K562 (cell line): ENCODE measurements at regions of chr9 and their contacts with region 1.

Region 1: DNA sequence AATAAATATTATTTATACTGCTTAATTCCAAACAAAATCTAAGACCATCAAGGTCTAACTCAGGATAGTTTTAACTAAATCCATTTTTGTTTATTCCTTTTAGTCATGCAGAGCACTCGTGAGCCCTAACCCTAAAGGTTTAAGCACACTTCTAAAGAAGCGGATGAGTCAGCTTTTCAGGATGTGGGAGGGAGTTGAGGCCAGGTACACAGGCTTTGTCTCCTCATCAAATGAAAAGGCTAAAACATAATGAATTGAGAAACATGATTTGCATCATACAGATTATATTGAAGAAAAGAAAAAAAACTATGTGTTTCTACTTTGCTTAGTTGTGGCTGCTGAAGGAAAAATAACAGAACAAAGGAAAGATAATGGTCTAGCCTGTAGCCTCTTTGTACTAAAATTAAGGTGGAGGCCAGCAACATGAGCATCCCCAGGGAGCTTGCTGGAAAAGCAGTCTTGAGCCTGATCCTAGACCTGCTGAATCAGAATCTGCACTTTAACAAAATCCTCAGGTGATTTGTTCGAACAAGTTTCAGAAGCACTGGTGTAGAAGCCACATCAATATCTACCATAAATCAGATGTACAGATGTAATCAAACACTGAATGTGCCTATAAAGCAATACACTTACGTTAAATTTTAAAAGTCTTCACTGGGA is 21.1 kb upstream of the ISCA1 start:
- DNase-seq: peak; percentile 7 to 12 (median 10)
- ATAC-seq: no peak
- H3K4me3 ChIP-seq: no peak overlapping the region
- H3K27ac ChIP-seq: no peak overlapping the region
- H3K4me1 ChIP-seq: no peaks in the 10 kb centered on the region
- H3K27me3 ChIP-seq: no peaks in the 10 kb centered on the region
- CTCF ChIP-seq: no peak
- EP300 ChIP-seq: no peak
- POLR2A ChIP-seq: no peak
- RAD21 ChIP-seq: no peak

Region 2: GRCh38 chr9:86337469-86338108 is 34.1 kb after region 1 on chr9:
- CTCF ChIA-PET with region 1: no interaction called
- POLR2A ChIA-PET with region 1: no interaction called
- in situ Hi-C with region 1: loop called (anchors 5 kb)
- intact Hi-C with region 1: no loop called
- DNase-seq: no peak
- ATAC-seq: no peak
- H3K4me3 ChIP-seq: no peak overlapping the region
- H3K27ac ChIP-seq: no peak overlapping the region
- H3K4me1 ChIP-seq: no peaks in the 10 kb centered on the region
- H3K27me3 ChIP-seq: no peaks in the 10 kb centered on the region
- CTCF ChIP-seq: no peak
- EP300 ChIP-seq: no peak
- POLR2A ChIP-seq: no peak
- RAD21 ChIP-seq: no peak